ENCODE measurements at regions of chr2 and their contacts with region 1.

Region 1: GRCh38 chr2:14587139-14587538 is 45.4 kb upstream of the LRATD1 start:
- DNase-seq: peak; percentile 44 to 65
- H3K4me3 ChIP-seq: no peak overlapping the region
- H3K27ac ChIP-seq: no peak overlapping the region
- H3K4me1 ChIP-seq: no peaks in the 10 kb centered on the region
- H3K27me3 ChIP-seq: no peaks in the 10 kb centered on the region
- CTCF ChIP-seq: no peak

Region 2: GRCh38 chr2:14524057-14524802 is 62.9 kb before region 1 on chr2:
- CTCF ChIA-PET with region 1: no interaction called
- POLR2A ChIA-PET with region 1: no interaction called
- intact Hi-C with region 1: loop called (anchors 10 kb)
- DNase-seq: peak; percentile 35 to 78
- H3K4me3 ChIP-seq: no peak overlapping the region
- H3K27ac ChIP-seq: peak overlapping the region; percentile 61
- H3K4me1 ChIP-seq: peaks cover 4% of the 10 kb centered on the region; the same call in 1 of the 2 replicates
- H3K27me3 ChIP-seq: no peaks in the 10 kb centered on the region
- CTCF ChIP-seq: no peak

Region 3: DNA sequence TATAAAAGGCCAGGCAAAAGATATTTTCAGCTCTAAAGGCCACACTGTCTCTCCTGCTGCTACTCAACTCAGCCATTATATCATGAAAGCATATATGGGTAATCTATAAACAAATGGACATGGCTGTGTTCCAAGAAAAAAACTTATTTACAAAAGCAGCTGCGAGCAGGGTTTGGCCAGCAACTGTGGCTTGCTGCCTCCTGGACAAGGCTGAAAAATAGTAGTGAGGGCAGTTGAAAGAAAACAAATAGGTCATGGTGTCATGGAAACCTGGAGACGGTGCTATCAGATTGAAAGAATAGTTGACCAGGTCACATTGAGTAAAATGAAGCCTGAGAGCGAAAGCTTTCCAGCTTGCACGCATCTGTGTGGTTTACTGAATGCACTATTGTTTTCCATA is 43.8 kb before region 1 on chr2:
- CTCF ChIA-PET with region 1: no interaction called
- POLR2A ChIA-PET with region 1: interaction called, 45 read pairs
- intact Hi-C with region 1: no loop called
- DNase-seq: peak in 1 of 2 experiments; percentile 41
- H3K4me3 ChIP-seq: no peak overlapping the region
- H3K27ac ChIP-seq: no peak overlapping the region
- H3K4me1 ChIP-seq: no peaks in the 10 kb centered on the region
- H3K27me3 ChIP-seq: no peaks in the 10 kb centered on the region
- CTCF ChIP-seq: no peak

Region 4: GRCh38 chr2:14569294-14569693 is 17.8 kb before region 1 on chr2:
- CTCF ChIA-PET with region 1: no interaction called
- POLR2A ChIA-PET with region 1: no interaction called
- intact Hi-C with region 1: no loop called
- DNase-seq: no peak
- H3K4me3 ChIP-seq: no peak overlapping the region
- H3K27ac ChIP-seq: no peak overlapping the region
- H3K4me1 ChIP-seq: no peaks in the 10 kb centered on the region
- H3K27me3 ChIP-seq: no peaks in the 10 kb centered on the region
- CTCF ChIP-seq: no peak

Region 5: DNA sequence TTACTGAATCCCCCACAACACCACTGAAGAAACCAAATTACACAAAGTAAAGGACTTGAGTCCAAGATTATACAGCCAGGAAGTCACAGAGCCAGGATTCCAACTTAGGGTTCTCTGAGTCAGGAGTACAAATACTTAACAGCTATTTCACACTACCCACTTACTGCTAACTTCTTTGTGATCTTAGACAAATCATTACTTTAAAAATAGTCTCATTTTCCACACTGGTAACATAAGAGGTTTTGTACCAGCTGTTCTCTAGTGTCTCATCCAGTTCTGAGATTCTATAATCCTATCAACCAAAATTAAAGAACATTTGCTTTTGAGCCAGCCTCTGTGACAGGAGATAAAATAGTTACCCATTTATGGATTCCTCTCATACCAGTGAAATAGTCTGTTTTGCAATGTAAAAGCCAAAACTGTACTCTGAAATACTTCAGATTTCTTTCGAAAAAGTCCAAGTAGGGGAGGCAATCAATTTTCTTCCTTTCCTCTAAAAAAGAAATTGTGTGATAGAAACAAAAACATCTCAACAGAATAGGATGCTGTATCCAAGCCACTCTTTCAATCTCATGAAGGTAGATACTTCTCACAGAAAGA is 203.0 kb after region 1 on chr2:
- CTCF ChIA-PET with region 1: no interaction called
- POLR2A ChIA-PET with region 1: no interaction called
- intact Hi-C with region 1: no loop called
- DNase-seq: no peak
- H3K4me3 ChIP-seq: no peak overlapping the region
- H3K27ac ChIP-seq: no peak overlapping the region
- H3K4me1 ChIP-seq: no peaks in the 10 kb centered on the region
- H3K27me3 ChIP-seq: no peaks in the 10 kb centered on the region
- CTCF ChIP-seq: no peak

Measured in PC-9 (cell line).